ENCODE measurements at regions of chr5 and their contacts with region 1.

Region 1: DNA sequence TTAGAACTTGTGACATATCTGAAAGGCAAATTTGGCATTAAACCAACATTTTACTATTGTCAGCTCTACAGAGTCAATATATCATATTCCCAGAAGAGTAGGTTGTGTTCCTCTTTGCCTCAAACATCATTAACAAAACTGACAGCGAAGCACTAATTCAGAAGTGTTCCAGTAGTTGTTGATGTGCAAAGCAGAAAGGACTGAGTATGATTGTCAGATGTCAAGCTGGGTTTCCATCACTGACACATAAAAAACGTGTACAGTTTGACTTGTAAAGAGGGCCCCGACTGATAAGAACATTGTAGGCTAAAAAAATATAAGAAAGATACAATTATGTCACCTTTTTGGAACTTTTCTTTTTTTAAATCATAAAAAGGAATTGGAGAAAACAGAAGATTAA is 101.5 kb upstream of the ZNF608 start:
- DNase-seq: no peak
- ATAC-seq: no peak
- H3K4me3 ChIP-seq: no peak overlapping the region
- H3K4me3 Mint-ChIP-seq: no peak overlapping the region
- H3K27ac ChIP-seq: no peak overlapping the region
- H3K27ac Mint-ChIP-seq: no peak overlapping the region
- H3K4me1 ChIP-seq: peaks cover 8 to 13% of the 10 kb centered on the region in 2 donors
- H3K4me1 Mint-ChIP-seq: peaks cover 21% of the 10 kb centered on the region
- H3K27me3 ChIP-seq: no peaks in the 10 kb centered on the region
- H3K27me3 Mint-ChIP-seq: no peaks in the 10 kb centered on the region
- CTCF ChIP-seq: no peak

Region 2: GRCh38 chr5:124677374-124678351 is 170.2 kb before region 1 on chr5:
- CTCF ChIA-PET with region 1: no interaction called
- POLR2A ChIA-PET with region 1: interaction called, 10 read pairs
- intact Hi-C with region 1: no loop called
- DNase-seq: no peak
- ATAC-seq: no peak
- H3K4me3 ChIP-seq: no peak overlapping the region
- H3K4me3 Mint-ChIP-seq: no peak overlapping the region
- H3K27ac ChIP-seq: no peak overlapping the region
- H3K27ac Mint-ChIP-seq: no peak overlapping the region
- H3K4me1 ChIP-seq: peaks cover 16% of the 10 kb centered on the region in 2 donors
- H3K4me1 Mint-ChIP-seq: peaks cover 23% of the 10 kb centered on the region
- H3K27me3 ChIP-seq: no peaks in the 10 kb centered on the region
- H3K27me3 Mint-ChIP-seq: no peaks in the 10 kb centered on the region
- CTCF ChIP-seq: no peak

Measured in B cell (primary cell).